Natural killer cell (primary cell): ENCODE measurements at regions of chr6 and their contacts with region 1.

Region 1: GRCh38 chr6:7389451-7390225 is at the starts of genes CAGE1 and RIOK1:
- DNase-seq: peak; percentile 93 to 97
- ATAC-seq: peak; percentile 86 to 97 (median 88)
- H3K4me3 ChIP-seq: peak within 1 kb of the TSS; percentile 73
- H3K4me3 Mint-ChIP-seq: peak within 1 kb of the TSS; percentile 91
- H3K27ac ChIP-seq: peak within 1 kb of the TSS; percentile 98
- H3K27ac Mint-ChIP-seq: peak within 1 kb of the TSS; percentile 87 to 88
- H3K4me1 ChIP-seq: peaks cover 12% of the 10 kb centered on the region
- H3K4me1 Mint-ChIP-seq: peaks cover 28 to 30% of the 10 kb centered on the region in 2 donors
- H3K27me3 ChIP-seq: no peaks in the 10 kb centered on the region
- H3K27me3 Mint-ChIP-seq: no peaks in the 10 kb centered on the region
- CTCF ChIP-seq: no peak
- total RNA-seq, gene CAGE1: 0.70 to 1.3 (median 1.1) TPM
- total RNA-seq, gene RIOK1: 36.8 to 48.4 (median 38.2) TPM

Region 2: DNA sequence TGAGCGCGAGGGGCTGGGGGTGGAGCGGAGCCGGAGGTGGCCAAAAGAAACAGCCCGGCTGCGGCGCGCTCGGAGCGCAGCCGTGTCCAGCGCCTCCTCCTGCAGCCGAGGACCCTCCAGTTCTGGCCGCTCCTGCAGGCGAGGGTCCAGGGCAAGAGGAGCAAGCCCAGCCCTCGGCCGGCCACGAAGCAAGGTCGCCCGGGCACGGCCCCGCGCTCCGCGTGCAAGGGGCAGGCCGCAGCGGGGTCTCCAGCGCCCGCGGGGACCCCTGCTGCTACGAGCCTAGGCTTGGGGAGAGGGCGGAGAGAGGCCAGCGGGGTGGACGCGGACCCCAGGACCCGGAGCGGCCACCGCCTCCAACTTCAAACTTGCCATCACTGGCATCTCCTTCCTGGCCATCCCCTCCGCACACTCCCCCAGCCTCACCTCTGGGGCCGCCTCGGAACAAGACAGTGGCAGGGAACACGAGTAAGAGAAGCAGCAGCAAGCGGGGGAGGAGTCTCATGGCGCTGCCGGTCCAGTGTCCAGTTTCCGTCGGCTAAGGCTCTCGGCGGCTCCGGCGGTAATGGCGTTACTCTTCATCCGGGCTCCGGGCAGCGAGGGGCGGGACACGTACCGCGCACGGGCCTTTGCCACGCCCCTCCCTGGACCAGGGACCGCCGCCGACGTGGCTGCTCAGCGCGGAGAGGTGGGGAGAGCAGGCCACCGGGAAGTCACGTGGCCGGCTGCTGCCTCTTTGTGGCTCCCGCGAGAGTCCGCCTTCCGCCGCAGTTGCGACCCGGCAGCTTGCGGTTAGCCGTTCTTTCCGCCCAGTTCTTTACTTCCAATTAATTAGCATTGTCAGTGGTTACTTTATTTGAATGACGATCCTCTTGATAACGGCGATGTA is 76.8 kb before region 1 on chr6 and contains the start of gene SSR1:
- intact Hi-C with region 1: loop called (anchors 1 kb)
- DNase-seq: peak; percentile 94 to 95
- ATAC-seq: peak; percentile 96 to 100 (median 98)
- H3K4me3 ChIP-seq: peak within 1 kb of the TSS; percentile 95
- H3K4me3 Mint-ChIP-seq: peak within 1 kb of the TSS; percentile 98
- H3K27ac ChIP-seq: peak within 1 kb of the TSS; percentile 87
- H3K27ac Mint-ChIP-seq: peak within 1 kb of the TSS; percentile 90 to 94
- H3K4me1 ChIP-seq: peaks cover 19% of the 10 kb centered on the region
- H3K4me1 Mint-ChIP-seq: peaks cover 36 to 39% of the 10 kb centered on the region in 2 donors
- H3K27me3 ChIP-seq: no peaks in the 10 kb centered on the region
- H3K27me3 Mint-ChIP-seq: no peaks in the 10 kb centered on the region
- CTCF ChIP-seq: no peak
- total RNA-seq, gene SSR1: 82.8 to 97.6 (median 93.1) TPM

Region 3: GRCh38 chr6:7589949-7590917 is 200.6 kb after region 1 on chr6 and contains the start of gene SNRNP48:
- intact Hi-C with region 1: loop called (anchors 1 kb)
- DNase-seq: peak; percentile 93 to 94
- ATAC-seq: peak; percentile 99 to 100 (median 99)
- H3K4me3 ChIP-seq: peak within 1 kb of the TSS; percentile 72
- H3K4me3 Mint-ChIP-seq: peak within 1 kb of the TSS; percentile 99
- H3K27ac ChIP-seq: peak within 1 kb of the TSS; percentile 19
- H3K27ac Mint-ChIP-seq: peak within 1 kb of the TSS; percentile 75 to 97
- H3K4me1 ChIP-seq: peaks cover 8% of the 10 kb centered on the region
- H3K4me1 Mint-ChIP-seq: peaks cover 38 to 41% of the 10 kb centered on the region in 2 donors
- H3K27me3 ChIP-seq: no peaks in the 10 kb centered on the region
- H3K27me3 Mint-ChIP-seq: peaks cover under 1% of the 10 kb centered on the region in 2 donors
- CTCF ChIP-seq: no peak
- total RNA-seq, gene SNRNP48: 12.3 to 17.0 (median 14.0) TPM